Gastrocnemius medialis (tissue), 4 donors: ENCODE measurements at regions of chr1 and their contacts with region 1.

Region 1: GRCh38 chr1:41537788-41538351 is 53.4 kb upstream of the EDN2 start:
- DNase-seq: peak; percentile 80 to 89
- ATAC-seq: peak; percentile 88 to 97
- H3K4me3 ChIP-seq: no peak overlapping the region
- H3K27ac ChIP-seq: peak overlapping the region; percentile 56 to 86 (median 74)
- H3K4me1 ChIP-seq: peaks cover 25 to 29% of the 10 kb centered on the region in 2 donors
- H3K27me3 ChIP-seq: no peaks in the 10 kb centered on the region
- CTCF ChIP-seq: no peak
- POLR2A ChIP-seq: no peak

Region 2: DNA sequence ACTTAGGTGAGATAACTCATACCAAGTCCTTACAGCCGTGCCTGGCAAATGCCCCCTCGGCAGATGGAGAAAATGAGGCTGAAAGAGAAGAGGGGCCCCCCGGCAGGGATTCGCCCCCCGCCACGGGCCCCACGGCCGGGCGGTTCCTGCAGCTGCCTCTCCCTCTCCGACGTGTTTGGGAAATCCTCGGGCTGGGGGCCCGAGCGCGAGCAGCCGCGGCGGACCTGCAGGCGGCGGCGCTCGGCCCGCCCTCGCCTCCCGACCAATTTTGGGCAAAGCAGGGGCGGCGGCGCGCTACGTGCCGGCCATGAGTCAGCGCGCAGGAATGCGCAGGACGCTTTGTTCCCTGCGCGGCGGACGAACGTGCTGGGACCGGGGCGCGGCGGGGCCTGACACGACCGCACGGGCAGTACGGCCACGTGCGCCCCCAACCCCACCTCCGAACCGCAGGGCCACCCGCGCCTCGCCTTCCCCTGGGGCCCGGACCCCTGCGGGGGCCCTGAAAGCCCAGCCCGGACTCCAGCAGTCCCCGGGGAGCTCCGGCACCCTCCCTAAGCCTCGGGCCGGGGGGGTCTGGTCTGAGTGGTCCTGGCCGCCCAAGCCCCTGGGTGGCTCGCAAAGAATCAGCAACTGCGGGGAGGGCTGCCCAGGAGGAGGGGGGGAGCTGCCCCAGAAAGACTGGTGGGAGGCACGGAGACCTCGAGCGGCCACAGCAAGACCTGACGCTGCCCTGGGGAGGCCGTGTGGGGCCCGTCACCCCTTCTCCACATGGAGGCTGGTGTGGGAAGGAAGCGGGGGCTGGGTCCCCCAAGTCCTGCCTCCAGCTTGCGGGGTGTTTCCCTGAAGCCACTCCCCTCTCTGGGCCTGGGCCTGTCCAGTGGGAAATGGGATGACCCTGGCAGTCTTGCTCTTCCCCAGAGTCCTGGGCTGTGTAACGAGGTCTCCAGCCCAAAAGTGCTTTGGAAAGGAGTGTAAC is 41.5 kb before region 1 on chr1:
- in situ Hi-C with region 1: no loop called
- intact Hi-C with region 1: loop called (anchors 2 kb)
- DNase-seq: peak; percentile 90 to 94
- ATAC-seq: peak; percentile 55 to 63
- H3K4me3 ChIP-seq: peak overlapping the region; percentile 38 to 54 (median 42)
- H3K27ac ChIP-seq: peak overlapping the region; percentile 88 to 93 (median 90)
- H3K4me1 ChIP-seq: peaks cover 48 to 49% of the 10 kb centered on the region in 2 donors
- H3K27me3 ChIP-seq: no peaks in the 10 kb centered on the region
- CTCF ChIP-seq: peak in 3 of 5 experiments; percentile 14 to 49 (median 42)
- POLR2A ChIP-seq: peak; percentile 81 to 83

Region 3: GRCh38 chr1:41558761-41559171 is 20.9 kb after region 1 on chr1:
- in situ Hi-C with region 1: no loop called
- intact Hi-C with region 1: loop called (anchors 1 kb)
- DNase-seq: peak; percentile 89 to 98
- ATAC-seq: peak; percentile 94 to 96
- H3K4me3 ChIP-seq: no peak overlapping the region
- H3K27ac ChIP-seq: peak overlapping the region; percentile 76 to 83 (median 78)
- H3K4me1 ChIP-seq: peaks cover 17 to 21% of the 10 kb centered on the region in 2 donors
- H3K27me3 ChIP-seq: no peaks in the 10 kb centered on the region
- CTCF ChIP-seq: no peak
- POLR2A ChIP-seq: no peak

Region 4: DNA sequence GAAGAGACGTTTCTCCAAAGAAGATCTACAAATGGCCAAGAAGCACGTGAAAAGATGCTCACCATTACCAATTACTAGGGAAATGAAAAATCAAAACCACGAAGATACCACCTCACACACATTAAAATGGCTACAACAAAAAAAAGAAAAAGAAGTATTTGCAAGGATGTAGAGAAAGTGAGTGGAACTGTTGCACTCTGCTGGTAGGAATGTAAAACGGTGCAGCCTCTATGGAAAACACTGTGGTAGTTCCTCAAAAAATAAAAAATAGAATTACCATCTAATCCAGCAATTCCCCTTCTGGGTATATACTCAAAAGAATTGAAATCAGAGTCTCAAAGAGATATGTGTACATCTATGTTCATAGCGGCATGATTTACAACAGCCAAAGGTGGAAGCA is 62.0 kb after region 1 on chr1:
- in situ Hi-C with region 1: no loop called
- intact Hi-C with region 1: no loop called
- DNase-seq: no peak
- ATAC-seq: no peak
- H3K4me3 ChIP-seq: no peak overlapping the region
- H3K27ac ChIP-seq: no peak overlapping the region
- H3K4me1 ChIP-seq: no peaks in the 10 kb centered on the region
- H3K27me3 ChIP-seq: no peaks in the 10 kb centered on the region
- CTCF ChIP-seq: peak in 2 of 5 experiments; percentile 19 to 21
- POLR2A ChIP-seq: no peak